Right lobe of liver (tissue), 6 donors: ENCODE measurements at regions of chr4 and their contacts with region 1.

Region 1: DNA sequence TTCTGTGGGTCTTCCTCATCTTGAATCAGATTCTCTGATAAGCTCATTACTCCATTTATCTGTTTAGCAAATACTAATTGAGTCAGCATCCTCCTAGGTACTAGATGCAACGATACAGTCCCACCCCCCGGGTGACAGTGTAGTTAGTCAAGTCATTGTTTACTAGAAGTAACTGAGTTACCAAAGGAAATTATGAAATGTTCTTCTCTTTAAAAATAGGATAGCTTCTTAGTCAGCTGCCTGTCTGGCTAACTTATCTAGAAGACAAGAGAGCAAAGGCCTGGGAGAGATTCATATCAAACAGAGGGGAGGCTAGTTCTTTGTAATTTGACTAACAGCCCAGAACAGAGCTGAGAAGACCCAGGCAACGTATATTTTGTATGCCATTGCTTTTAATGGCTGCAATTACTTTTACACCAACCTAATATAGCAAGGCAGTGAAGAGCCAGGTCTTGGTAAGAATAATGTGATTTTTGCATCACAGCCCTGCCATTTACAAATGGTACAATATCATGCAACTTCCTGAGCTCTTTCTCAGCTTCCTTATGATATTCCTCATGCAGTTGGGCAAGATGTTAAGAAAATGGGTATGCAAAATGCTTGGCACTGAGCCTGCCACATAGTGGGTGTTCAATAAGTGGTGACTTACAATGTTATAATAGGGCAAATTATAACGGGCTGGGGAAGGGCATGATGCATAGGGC is 149.9 kb downstream of the CHIC2 start:
- DNase-seq: no peak
- ATAC-seq: peak in 2 of 4 donors; percentile 22 to 56
- H3K4me3 ChIP-seq: no peak overlapping the region
- H3K27ac ChIP-seq: no peak overlapping the region
- H3K4me1 ChIP-seq: no peaks in the 10 kb centered on the region
- H3K27me3 ChIP-seq: no peaks in the 10 kb centered on the region
- CTCF ChIP-seq: no peak
- POLR2A ChIP-seq: no peak

Region 2: GRCh38 chr4:53840643-53841042 is 73.8 kb before region 1 on chr4:
- intact Hi-C with region 1: no loop called
- DNase-seq: no peak
- ATAC-seq: peak in 2 of 4 donors; percentile 28 to 98
- H3K4me3 ChIP-seq: no peak overlapping the region
- H3K27ac ChIP-seq: no peak overlapping the region
- H3K4me1 ChIP-seq: no peaks in the 10 kb centered on the region
- H3K27me3 ChIP-seq: no peaks in the 10 kb centered on the region
- CTCF ChIP-seq: no peak
- POLR2A ChIP-seq: no peak

Region 3: GRCh38 chr4:54213761-54214160 is 299.3 kb after region 1 on chr4:
- intact Hi-C with region 1: loop called in 1 of 2 experiments (anchors 5 kb)
- DNase-seq: no peak
- ATAC-seq: no peak
- H3K4me3 ChIP-seq: no peak overlapping the region
- H3K27ac ChIP-seq: no peak overlapping the region
- H3K4me1 ChIP-seq: no peaks in the 10 kb centered on the region
- H3K27me3 ChIP-seq: no peaks in the 10 kb centered on the region
- CTCF ChIP-seq: no peak
- POLR2A ChIP-seq: no peak